CD14-positive monocyte (primary cell): ENCODE measurements at regions of chr18 and their contacts with region 1.

Region 1: DNA sequence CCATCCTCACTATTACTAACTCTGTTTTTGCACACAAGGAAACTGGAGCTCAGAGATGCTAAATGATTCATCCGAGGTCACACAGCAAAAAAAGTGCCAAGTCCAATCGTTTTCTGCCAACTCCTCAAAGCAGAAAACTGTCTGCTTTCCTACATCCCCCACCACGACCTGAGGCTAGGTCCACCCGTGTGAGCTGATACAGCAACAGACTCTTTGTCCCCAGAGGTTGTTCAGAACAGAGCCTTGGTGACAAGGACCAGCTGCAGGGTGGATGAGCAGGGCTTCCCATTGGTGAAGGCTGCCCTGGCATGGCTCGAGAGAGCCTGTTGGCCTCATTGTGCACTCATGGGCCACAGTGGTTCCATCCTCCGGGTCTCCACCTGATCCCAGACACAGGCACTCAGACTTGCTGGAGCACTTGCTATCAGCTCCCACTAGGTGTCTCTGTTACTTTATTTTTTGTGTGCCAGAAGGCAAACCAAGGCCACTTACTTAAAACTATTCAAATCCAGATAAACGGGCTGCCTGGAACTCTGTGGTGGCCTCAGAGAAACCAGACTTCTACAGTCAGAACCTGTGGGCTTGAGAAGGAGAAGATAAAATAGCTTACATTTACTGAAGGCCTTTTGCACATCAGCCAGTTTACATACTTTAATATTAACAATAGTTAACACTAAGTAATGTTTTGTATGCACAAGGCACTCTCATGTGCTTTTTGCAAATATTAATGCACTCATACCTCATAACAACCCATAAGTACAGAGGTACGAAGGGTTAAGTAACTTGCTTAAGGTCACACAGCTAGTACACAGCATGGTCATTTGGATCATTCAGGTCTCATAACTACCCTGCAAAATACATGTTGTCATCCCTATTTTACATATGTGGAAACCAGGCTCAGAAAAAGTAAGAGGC is 62.9 kb upstream of the CTIF start:
- DNase-seq: peak; percentile 25 to 44 (median 41)
- H3K4me3 ChIP-seq: no peak overlapping the region
- H3K4me3 Mint-ChIP-seq: no peak overlapping the region
- H3K27ac ChIP-seq: no peak overlapping the region
- H3K27ac Mint-ChIP-seq: no peak overlapping the region
- H3K4me1 ChIP-seq: no peaks in the 10 kb centered on the region
- H3K4me1 Mint-ChIP-seq: peaks cover under 1% of the 10 kb centered on the region
- H3K27me3 ChIP-seq: no peaks in the 10 kb centered on the region
- H3K27me3 Mint-ChIP-seq: peaks cover 0 to 8% (median 0%) of the 10 kb centered on the region in 3 donors
- CTCF ChIP-seq: peak; percentile 76

Region 2: DNA sequence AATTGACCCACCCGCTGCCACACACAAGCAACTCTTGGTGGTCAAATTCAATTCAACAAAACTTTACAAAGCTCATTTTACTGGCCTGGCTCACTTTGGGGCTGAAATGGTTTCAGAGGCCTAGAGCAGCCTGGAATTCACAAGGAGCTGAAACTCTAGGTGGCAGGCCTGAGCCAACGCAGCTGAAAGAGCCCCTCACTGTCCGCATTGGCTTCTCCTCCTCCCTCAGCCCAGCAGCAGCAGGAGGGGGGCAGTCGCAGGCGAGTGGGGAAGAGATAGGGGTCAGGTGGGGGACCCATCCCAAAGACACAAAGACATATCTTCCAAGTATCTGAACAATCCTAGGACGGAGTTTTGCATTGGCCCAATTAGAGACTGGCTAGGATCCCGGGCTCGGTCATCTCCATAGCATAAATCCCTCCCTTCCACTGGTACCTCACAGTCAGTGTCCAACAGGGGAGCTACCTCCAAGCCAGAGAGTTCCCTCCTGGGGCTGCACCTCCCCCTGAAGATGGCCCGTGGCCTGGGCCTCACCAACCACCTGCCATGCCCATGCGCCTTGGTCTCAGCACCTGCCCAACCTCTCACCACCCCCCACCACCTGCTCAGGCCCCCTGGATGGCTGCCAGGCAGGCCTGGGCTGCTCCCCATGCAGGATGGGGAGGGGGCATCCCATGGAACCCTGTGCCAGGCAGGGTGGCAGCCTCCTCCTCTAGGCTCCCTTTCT is 180.1 kb before region 1 on chr18:
- intact Hi-C with region 1: no loop called
- DNase-seq: no peak
- H3K4me3 ChIP-seq: no peak overlapping the region
- H3K4me3 Mint-ChIP-seq: no peak overlapping the region
- H3K27ac ChIP-seq: no peak overlapping the region
- H3K27ac Mint-ChIP-seq: peak overlapping the region in 1 of 7 donors; percentile 66
- H3K4me1 ChIP-seq: peaks cover 23 to 27% of the 10 kb centered on the region in 2 donors
- H3K4me1 Mint-ChIP-seq: peaks cover 31% of the 10 kb centered on the region
- H3K27me3 ChIP-seq: no peaks in the 10 kb centered on the region
- H3K27me3 Mint-ChIP-seq: peaks cover 2 to 3% (median 2%) of the 10 kb centered on the region in 3 donors
- CTCF ChIP-seq: no peak

Region 3: DNA sequence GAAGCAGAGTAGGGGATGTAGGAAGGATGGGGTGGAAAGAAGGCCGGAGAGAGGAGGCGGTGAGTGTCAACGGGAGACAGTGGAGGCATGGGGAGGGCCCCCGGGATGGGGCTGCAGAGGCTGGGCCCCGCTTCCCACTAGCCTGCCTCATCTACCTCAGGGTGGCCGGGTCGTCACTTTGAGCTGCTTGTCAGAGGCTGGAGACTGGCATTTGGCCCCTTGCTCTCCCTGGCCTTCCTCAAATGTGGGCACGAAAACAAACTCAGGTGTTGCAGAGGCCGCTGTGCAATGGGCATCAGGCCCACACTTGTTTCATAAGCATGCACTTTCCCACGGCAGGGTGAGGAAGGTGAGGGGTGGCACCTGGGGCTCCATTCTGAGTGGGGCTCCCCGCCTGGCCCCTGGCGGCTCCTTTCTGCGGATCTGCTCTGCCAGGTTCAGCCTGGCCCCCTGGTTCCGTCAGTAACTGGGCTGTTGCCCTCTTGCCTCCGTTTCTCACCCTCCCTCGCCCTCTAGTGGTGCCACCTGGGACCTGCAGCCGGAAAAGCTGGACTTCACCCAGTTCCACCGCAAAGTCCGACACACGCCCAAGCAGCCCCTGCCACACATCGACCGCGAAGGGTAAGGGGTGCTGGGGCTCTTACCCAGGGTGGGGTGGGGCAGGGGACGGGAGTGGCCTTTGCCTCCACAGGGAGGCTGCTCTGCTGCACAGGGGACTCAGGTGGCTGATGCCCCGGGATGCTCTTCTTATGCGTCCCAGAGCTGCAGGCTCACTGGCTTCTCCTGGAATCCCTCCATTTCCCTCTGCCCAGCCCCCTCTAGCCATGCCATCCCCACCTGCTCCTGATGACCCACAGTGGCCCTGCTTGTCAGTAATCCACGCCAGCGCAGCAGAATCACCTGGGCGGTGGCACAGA is 188.3 kb after region 1 on chr18:
- intact Hi-C with region 1: loop called (anchors 1 to 10 kb)
- DNase-seq: peak; percentile 38 to 46 (median 39)
- H3K4me3 ChIP-seq: no peak overlapping the region
- H3K4me3 Mint-ChIP-seq: no peak overlapping the region
- H3K27ac ChIP-seq: no peak overlapping the region
- H3K27ac Mint-ChIP-seq: no peak overlapping the region
- H3K4me1 ChIP-seq: peaks cover 21% of the 10 kb centered on the region in 2 donors
- H3K4me1 Mint-ChIP-seq: peaks cover 23% of the 10 kb centered on the region
- H3K27me3 ChIP-seq: no peaks in the 10 kb centered on the region
- H3K27me3 Mint-ChIP-seq: peaks cover 0 to 2% (median 0%) of the 10 kb centered on the region in 3 donors
- CTCF ChIP-seq: peak; percentile 84